HepG2 (cell line): ENCODE measurements at regions of chr3 and their contacts with region 1.

Region 1: GRCh38 chr3:76949462-76949861 is 90.4 kb upstream of the ROBO2 start:
- DNase-seq: peak; percentile 11
- ATAC-seq: peak; percentile 91
- H3K4me3 ChIP-seq: peak overlapping the region in 2 of 3 experiments; percentile 26 to 33; a peak in 2 of 6 replicates
- H3K27ac ChIP-seq: peak overlapping the region; percentile 17
- H3K4me1 ChIP-seq: peaks cover 23% of the 10 kb centered on the region
- H3K27me3 ChIP-seq: no peaks in the 10 kb centered on the region
- CTCF ChIP-seq: no peak
- EP300 ChIP-seq: no peak; a peak in 1 of 4 replicates
- POLR2A ChIP-seq: no peak
- RAD21 ChIP-seq: no peak

Region 2: DNA sequence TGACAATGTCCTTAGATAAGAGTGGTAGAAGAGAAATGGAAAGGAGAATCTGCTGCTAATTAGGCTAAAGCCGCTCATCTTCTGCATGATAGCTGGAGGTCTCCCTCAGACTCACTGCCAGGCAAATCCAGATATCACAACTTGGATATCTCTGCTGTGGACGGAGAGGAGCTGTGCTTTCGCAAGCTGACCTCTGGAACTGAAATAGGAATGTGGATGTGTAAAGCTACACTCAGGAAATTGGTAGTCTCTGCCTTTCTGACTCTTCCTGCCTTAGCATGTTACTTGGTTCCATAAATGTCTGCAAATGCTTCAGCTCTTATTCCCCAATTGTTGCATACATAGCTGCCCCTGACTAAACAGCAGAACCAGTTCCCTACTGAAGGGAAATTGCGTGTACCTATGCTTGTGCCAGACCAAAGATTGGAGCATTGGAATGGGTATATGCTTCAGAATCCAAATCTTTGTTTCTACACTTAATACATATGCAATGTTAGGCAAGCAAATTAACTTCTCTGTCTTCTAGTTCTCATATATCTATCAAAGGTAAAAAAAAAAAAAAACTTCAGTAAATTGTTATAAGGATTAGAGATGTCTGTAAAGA is 15.8 kb after region 1 on chr3:
- CTCF ChIA-PET with region 1: no interaction called
- POLR2A ChIA-PET with region 1: no interaction called
- in situ Hi-C with region 1: no loop called
- intact Hi-C with region 1: loop called (anchors 2 kb)
- DNase-seq: peak; percentile 72
- ATAC-seq: peak; percentile 100
- H3K4me3 ChIP-seq: peak overlapping the region in 1 of 3 experiments; percentile 37; a peak in 1 of 6 replicates
- H3K27ac ChIP-seq: peak overlapping the region; percentile 71
- H3K4me1 ChIP-seq: peaks cover 30% of the 10 kb centered on the region
- H3K27me3 ChIP-seq: no peaks in the 10 kb centered on the region
- CTCF ChIP-seq: no peak
- EP300 ChIP-seq: peak in 1 of 2 experiments; percentile 66; a peak in 1 of 4 replicates
- POLR2A ChIP-seq: no peak
- RAD21 ChIP-seq: no peak